ENCODE measurements at regions of chr7 and their contacts with region 1.

Region 1: DNA sequence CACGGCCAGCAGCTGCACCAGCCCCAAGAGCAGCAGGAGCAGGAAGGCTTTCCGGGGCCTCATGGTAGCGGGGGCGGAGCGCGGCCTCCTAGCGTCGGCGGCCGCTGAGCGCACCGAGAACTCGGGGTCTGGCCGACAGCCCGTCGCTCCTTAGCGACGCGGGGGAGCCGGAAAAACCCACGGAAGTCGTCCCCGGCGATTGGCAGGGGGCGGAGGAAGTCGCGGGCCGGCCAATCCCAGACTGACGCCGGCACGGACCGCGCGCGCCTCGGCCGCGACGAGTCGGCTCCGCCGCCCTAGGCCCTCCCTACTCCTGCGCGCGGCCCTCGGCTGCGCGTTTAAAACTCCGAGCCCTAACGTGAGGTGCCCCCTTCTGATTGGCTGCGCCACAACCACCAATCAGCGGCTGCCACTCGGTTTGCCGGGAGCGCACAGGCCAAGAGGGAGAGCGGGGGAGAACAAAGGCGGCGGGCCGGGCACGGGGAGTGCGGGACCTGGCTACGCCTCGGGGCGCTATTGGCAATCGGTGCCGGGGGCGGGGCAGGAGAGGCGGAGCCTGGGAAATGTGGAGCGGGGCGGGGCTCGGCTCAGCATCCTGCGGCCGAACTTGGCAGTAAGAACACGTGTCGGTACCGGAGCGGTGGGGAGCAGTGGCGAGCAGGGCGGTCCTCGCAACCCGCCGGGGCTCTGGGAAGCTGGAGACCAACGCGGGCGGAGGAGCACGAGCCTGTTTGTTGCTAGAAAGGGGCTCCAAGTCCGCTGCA is at the start of gene PDIA4:
- DNase-seq: peak; percentile 100
- H3K4me3 ChIP-seq: peak within 1 kb of the TSS; percentile 59 to 90 (median 82)
- H3K27ac ChIP-seq: peak within 1 kb of the TSS; percentile 92 to 96 (median 95)
- H3K4me1 ChIP-seq: peaks cover 0 to 28% (median 23%) of the 10 kb centered on the region in 4 donors
- H3K27me3 ChIP-seq: no peaks in the 10 kb centered on the region
- CTCF ChIP-seq: peak in 2 of 4 experiments; percentile 26 to 29
- EP300 ChIP-seq: no peak
- POLR2A ChIP-seq: peak; percentile 42 to 60
- total RNA-seq, gene PDIA4: 34.3 to 47.4 (median 39.7) TPM

Region 2: DNA sequence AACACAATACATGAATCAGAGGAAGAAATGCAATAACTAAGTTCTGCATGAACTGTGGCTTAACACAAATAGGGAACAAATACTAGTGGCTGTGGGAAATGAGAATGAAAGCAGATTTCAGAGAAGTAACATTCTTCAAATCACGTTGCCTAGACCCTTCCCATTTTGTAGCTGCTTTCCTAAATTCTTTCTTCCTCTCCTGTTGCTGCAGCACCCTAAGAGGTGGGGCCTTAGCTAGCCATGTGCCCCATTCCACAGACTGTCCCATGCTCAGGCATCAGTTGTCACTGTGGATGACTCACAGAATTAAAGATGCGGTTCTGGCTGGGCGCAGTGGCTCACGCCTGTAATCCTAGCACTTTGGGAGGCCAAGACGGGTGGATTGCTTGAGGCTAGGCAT is 1142.7 kb before region 1 on chr7:
- intact Hi-C with region 1: no loop called
- DNase-seq: no peak
- H3K4me3 ChIP-seq: no peak overlapping the region
- H3K27ac ChIP-seq: no peak overlapping the region
- H3K4me1 ChIP-seq: no peaks in the 10 kb centered on the region
- H3K27me3 ChIP-seq: no peaks in the 10 kb centered on the region
- CTCF ChIP-seq: no peak
- EP300 ChIP-seq: no peak
- POLR2A ChIP-seq: no peak

Region 3: GRCh38 chr7:148670807-148671206 is 357.7 kb before region 1 on chr7:
- intact Hi-C with region 1: no loop called
- DNase-seq: no peak
- H3K4me3 ChIP-seq: no peak overlapping the region
- H3K27ac ChIP-seq: no peak overlapping the region
- H3K4me1 ChIP-seq: no peaks in the 10 kb centered on the region
- H3K27me3 ChIP-seq: no peaks in the 10 kb centered on the region
- CTCF ChIP-seq: no peak
- EP300 ChIP-seq: no peak
- POLR2A ChIP-seq: no peak

Region 4: GRCh38 chr7:148940702-148941597 is 87.6 kb before region 1 on chr7:
- intact Hi-C with region 1: loop called (anchors 5 kb)
- DNase-seq: peak; percentile 90
- H3K4me3 ChIP-seq: peak overlapping the region; percentile 57 to 84 (median 73)
- H3K27ac ChIP-seq: peak overlapping the region; percentile 82 to 91 (median 86)
- H3K4me1 ChIP-seq: peaks cover 0 to 20% (median 7%) of the 10 kb centered on the region in 4 donors
- H3K27me3 ChIP-seq: no peaks in the 10 kb centered on the region
- CTCF ChIP-seq: no peak
- EP300 ChIP-seq: peak in 1 of 4 donors; percentile 4
- POLR2A ChIP-seq: no peak

Region 5: GRCh38 chr7:148987010-148987750 is 41.3 kb before region 1 on chr7:
- intact Hi-C with region 1: loop called (anchors 2 kb)
- DNase-seq: peak; percentile 94
- H3K4me3 ChIP-seq: peak overlapping the region; percentile 59 to 65 (median 64)
- H3K27ac ChIP-seq: peak overlapping the region; percentile 82 to 89 (median 84)
- H3K4me1 ChIP-seq: peaks cover 0 to 36% (median 28%) of the 10 kb centered on the region in 4 donors
- H3K27me3 ChIP-seq: no peaks in the 10 kb centered on the region
- CTCF ChIP-seq: no peak
- EP300 ChIP-seq: no peak
- POLR2A ChIP-seq: no peak

Region 6: DNA sequence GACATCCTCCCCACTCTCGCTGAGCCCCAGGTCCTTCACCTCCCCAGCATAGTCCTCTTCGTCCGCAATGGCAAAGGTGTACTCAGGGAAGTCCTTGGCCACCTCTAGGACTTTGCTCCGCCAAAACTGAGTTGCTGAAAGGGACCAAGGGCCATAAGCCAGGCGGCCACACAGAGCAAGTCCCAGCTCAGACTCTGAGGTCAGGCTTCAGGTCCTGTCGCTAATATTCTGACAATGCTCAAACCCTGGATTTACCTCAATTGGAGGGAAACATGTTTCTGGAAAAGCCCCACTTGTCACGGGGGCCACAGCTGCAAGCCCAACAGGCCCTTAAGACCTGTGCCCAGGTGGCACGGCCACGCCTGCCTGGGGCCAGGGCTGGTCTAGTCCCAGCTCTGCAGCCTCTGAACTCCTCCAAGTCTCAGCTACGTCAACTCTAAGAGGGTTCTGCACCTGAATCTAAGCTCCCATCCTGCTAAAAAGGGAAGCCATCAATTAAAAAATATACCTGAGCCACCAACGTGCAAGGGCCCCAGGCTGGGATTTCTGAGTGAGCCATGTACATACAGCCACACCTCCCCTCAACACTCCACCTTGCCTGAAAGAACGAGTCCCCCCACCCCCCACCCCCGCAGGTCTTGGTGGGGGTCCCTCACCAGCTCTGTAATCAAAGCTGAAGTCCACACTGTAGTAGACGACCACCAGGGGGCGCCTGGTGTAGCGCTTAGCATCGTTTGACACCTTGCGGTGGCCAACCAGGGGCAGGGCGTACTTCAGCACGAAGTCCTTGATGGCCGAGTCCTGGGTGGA is 23.1 kb before region 1 on chr7:
- intact Hi-C with region 1: loop called (anchors 2 kb)
- DNase-seq: peak; percentile 92
- H3K4me3 ChIP-seq: no peak overlapping the region
- H3K27ac ChIP-seq: no peak overlapping the region
- H3K4me1 ChIP-seq: no peaks in the 10 kb centered on the region
- H3K27me3 ChIP-seq: no peaks in the 10 kb centered on the region
- CTCF ChIP-seq: peak; percentile 79 to 92 (median 89)
- EP300 ChIP-seq: no peak
- POLR2A ChIP-seq: no peak

Region 7: GRCh38 chr7:149838224-149838947 is 809.9 kb after region 1 on chr7 and contains the start of gene ZNF862:
- intact Hi-C with region 1: no loop called
- DNase-seq: peak; percentile 99
- H3K4me3 ChIP-seq: peak within 1 kb of the TSS; percentile 74 to 100 (median 96)
- H3K27ac ChIP-seq: peak within 1 kb of the TSS; percentile 89 to 98 (median 98)
- H3K4me1 ChIP-seq: peaks cover 0 to 15% (median 9%) of the 10 kb centered on the region in 4 donors
- H3K27me3 ChIP-seq: no peaks in the 10 kb centered on the region
- CTCF ChIP-seq: no peak
- EP300 ChIP-seq: no peak
- POLR2A ChIP-seq: peak; percentile 51 to 57
- total RNA-seq, gene ZNF862: 12.5 to 23.8 (median 15.9) TPM